A673 (cell line): ENCODE measurements at regions of chr7 and their contacts with region 1.

Region 1: DNA sequence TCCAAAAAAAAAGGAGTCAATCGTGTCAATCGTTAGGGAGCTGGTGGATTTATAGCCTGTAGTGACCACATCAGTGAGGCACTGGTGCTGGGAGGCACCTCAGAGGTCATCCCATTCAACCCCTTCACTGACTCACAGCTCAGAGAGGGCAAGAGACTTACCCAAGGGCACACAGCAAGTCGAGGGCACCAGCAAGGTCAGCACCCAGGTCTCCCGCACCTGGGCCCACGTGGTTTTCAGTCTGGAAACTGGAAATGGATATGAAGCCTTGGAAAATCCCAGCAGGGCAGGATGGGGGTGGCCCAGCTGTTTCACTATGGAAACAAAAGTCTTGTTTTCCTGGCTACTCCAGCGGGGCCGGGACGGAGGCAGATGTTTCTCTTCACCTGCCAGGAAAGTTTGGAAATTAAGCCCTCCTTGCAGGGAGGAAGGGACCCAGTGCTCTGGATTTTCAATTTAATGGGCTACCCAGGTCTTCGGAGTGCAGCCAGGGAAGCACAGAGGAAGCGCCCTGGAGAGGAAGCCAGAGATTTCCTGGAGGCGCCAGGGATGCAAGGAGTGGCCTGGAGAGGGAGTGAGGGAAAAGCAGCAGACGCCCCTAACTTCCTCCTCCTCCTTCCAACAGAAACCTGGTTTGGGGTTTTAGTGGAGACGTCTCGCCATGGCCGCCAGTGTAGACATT is 157.2 kb upstream of the TNRC18 start:
- DNase-seq: no peak
- H3K4me3 ChIP-seq: no peak overlapping the region
- H3K27ac ChIP-seq: no peak overlapping the region
- H3K4me1 ChIP-seq: no peaks in the 10 kb centered on the region
- H3K27me3 ChIP-seq: no peaks in the 10 kb centered on the region
- CTCF ChIP-seq: no peak

Region 2: DNA sequence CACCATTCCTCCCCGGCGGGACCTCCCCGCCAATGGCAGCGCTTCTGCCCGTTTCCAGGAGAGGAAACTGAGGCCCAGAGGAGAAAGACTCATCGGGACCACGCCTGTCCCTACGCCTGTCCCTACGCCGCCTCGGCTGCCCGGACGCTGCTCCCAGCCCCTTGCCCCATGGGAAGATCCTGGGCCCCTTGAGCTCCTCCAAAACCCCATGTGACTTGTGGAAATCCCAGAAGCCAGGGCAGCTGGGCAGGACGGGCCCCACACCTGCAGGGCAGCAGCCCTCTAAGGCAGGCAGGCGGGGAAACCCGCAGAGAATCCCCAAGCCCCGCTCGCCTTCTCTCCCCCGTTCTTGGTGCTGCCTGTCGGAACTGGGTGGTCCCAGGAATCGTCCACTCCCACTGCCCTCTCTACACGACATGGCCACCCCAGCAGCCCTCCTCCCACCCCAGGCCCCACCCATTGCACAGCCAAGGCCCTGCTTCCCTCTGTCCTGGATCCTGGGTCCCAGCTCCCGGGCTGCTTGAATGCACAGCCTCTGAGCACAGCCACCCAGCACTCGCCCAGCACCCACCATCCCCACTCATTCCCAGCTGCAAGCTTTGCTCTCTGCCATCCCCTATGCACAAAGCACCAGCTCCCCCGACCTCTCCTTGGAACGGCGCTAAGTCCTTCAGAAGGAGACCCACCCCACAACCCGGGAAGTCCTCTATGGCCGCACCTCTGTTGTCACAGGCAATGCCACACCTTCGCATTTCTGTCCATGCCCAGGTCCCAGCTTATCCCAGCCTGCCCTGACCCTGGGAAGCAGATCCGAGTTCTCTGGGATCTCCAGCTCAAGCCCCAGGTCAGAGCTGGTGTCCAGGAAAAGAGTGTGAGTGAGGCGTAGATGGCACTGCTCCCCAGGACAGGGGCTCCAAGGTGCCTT is 247.5 kb before region 1 on chr7:
- CTCF ChIA-PET with region 1: no interaction called
- POLR2A ChIA-PET with region 1: interaction called, 10 read pairs
- intact Hi-C with region 1: no loop called
- DNase-seq: no peak
- H3K4me3 ChIP-seq: no peak overlapping the region
- H3K27ac ChIP-seq: no peak overlapping the region
- H3K4me1 ChIP-seq: no peaks in the 10 kb centered on the region
- H3K27me3 ChIP-seq: no peaks in the 10 kb centered on the region
- CTCF ChIP-seq: no peak

Region 3: DNA sequence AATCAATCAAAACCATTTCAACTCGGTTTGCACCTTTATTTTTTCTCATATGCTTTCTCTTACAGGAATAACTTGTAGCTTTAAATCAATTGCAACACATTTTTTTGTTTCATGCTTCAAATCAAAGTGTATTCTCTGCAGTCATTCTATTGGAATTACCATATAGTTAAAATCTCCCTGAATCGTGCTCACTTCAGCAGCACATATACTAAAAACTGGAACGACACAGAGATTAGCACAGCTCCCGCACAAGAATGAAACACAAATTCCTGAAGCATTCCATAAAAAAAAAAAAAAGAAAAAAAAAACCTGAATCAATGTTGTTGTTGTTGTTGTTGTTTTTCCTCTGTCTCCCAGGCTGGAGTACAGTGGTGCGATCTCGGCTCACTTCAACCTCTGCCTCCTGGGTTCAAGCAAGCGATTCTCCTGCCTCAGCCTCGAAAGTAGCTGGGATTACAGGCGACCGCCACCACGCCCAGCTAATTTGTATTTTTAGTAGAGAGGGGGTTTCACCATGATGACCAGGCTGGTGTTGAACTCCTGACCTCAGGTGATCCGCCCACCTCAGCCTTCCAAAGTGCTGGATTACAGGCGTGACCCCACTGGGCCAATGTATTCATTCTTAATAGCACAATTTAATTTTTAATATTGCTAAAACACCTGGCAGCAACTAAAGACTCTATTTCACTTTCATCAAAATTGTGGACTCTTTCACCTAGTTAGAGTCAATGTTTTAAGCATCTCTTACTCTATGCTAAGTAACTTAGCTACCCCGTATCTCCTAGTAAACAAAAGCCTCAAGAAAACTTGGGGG is 476.7 kb after region 1 on chr7:
- CTCF ChIA-PET with region 1: no interaction called
- POLR2A ChIA-PET with region 1: no interaction called
- intact Hi-C with region 1: no loop called
- DNase-seq: no peak
- H3K4me3 ChIP-seq: peak overlapping the region; percentile 89
- H3K27ac ChIP-seq: peak overlapping the region; percentile 11
- H3K4me1 ChIP-seq: peaks cover 3% of the 10 kb centered on the region
- H3K27me3 ChIP-seq: no peaks in the 10 kb centered on the region
- CTCF ChIP-seq: no peak